ENCODE measurements at regions of chr5 and their contacts with region 1.

Region 1: DNA sequence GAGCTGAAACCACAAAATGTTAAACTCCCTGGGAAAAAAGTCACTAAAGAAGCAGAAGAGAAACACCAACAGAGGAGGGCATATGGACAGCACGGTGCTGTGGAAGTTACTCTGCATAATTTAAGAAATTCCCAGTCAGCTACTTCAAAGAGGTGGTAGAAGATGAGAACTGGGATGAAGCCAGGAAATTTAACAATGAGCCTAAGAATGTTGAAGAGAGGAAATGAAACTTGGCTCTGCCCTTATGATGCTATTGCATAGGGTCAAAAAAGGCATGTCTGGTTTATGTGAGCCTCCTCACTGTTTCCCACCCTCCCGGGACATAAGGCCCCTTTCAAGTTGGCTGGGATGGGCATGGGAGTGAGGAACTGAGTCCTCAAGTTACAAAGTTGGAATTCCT is 25.4 kb upstream of the SNX18 start:
- DNase-seq: no peak
- ATAC-seq: no peak
- H3K4me3 ChIP-seq: no peak overlapping the region
- H3K27ac ChIP-seq: no peak overlapping the region
- H3K4me1 ChIP-seq: peaks cover 3% of the 10 kb centered on the region; the same call in 1 of the 2 replicates
- H3K27me3 ChIP-seq: no peaks in the 10 kb centered on the region
- CTCF ChIP-seq: no peak
- EP300 ChIP-seq: no peak
- POLR2A ChIP-seq: no peak
- RAD21 ChIP-seq: no peak

Region 2: DNA sequence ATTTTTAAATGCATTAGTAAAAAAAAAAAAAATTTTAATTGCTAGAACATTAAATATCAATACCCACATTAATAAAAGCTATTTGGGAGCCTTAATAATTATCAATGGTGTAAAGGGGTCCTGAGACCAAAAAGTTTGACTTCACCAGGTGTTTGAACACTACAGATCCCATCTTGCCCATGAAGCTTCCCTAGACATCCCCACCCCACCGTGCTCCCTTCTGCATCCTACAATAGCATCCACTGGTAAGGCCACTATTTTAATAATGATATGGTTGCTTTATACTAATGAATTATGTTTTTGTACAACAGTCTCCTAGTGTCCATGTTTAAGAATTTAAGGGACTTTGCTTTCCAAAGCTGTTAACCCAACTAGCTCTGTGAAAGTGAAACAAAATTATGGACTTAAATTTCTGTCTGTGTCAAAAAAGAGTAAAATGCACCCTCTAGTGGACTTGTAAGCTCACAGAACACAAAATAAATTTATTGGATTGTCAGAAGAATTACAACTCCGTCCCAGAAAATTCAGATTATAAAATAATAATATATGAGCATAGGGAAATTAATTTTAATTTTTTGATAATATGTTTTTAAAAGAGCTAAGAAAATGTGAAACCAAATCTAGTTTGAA is 257.8 kb before region 1 on chr5:
- CTCF ChIA-PET with region 1: interaction called, 38 read pairs
- POLR2A ChIA-PET with region 1: no interaction called
- RAD21 ChIA-PET with region 1: interaction called, 6 read pairs
- SMC1A ChIA-PET with region 1: interaction called, 24 read pairs
- in situ Hi-C with region 1: no loop called
- intact Hi-C with region 1: no loop called
- DNase-seq: no peak
- ATAC-seq: peak; percentile 72
- H3K4me3 ChIP-seq: no peak overlapping the region
- H3K27ac ChIP-seq: no peak overlapping the region
- H3K4me1 ChIP-seq: no peaks in the 10 kb centered on the region
- H3K27me3 ChIP-seq: no peaks in the 10 kb centered on the region
- CTCF ChIP-seq: peak; percentile 26 to 50 (median 50); a peak in 5 of 6 replicates
- EP300 ChIP-seq: no peak
- POLR2A ChIP-seq: no peak
- RAD21 ChIP-seq: peak; percentile 66

Region 3: GRCh38 chr5:54254482-54255198 is 237.5 kb before region 1 on chr5:
- CTCF ChIA-PET with region 1: interaction called, 10 read pairs
- POLR2A ChIA-PET with region 1: no interaction called
- RAD21 ChIA-PET with region 1: interaction called, 3 read pairs
- SMC1A ChIA-PET with region 1: interaction called, 23 read pairs
- in situ Hi-C with region 1: no loop called
- intact Hi-C with region 1: no loop called
- DNase-seq: no peak
- ATAC-seq: no peak
- H3K4me3 ChIP-seq: no peak overlapping the region
- H3K27ac ChIP-seq: no peak overlapping the region
- H3K4me1 ChIP-seq: peaks cover 3% of the 10 kb centered on the region
- H3K27me3 ChIP-seq: no peaks in the 10 kb centered on the region
- CTCF ChIP-seq: peak in 1 of 3 experiments; percentile 15; a peak in 1 of 6 replicates
- EP300 ChIP-seq: no peak
- POLR2A ChIP-seq: no peak
- RAD21 ChIP-seq: no peak

Region 4: DNA sequence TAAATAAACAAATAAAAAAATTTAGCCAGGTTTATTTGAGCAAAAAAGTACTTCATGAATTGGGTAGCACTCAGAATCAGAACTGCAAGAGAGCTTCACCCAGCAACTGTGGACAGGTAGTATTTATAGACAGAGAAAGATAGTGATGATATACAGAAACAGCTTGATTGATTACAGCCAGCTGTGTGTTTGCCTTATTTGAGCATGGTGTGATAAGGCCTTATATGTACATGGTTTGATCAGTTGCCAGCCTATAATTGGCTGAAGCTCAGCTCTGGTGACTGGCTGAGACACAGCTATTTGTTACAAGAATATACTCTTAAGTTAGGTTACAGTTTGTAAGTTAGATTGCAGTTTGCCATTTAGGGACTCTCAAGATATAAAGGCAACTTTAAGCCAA is 147.5 kb before region 1 on chr5:
- CTCF ChIA-PET with region 1: interaction called, 13 read pairs
- POLR2A ChIA-PET with region 1: no interaction called
- RAD21 ChIA-PET with region 1: no interaction called
- SMC1A ChIA-PET with region 1: no interaction called
- in situ Hi-C with region 1: no loop called
- intact Hi-C with region 1: no loop called
- DNase-seq: no peak
- ATAC-seq: no peak
- H3K4me3 ChIP-seq: no peak overlapping the region
- H3K27ac ChIP-seq: no peak overlapping the region
- H3K4me1 ChIP-seq: no peaks in the 10 kb centered on the region
- H3K27me3 ChIP-seq: no peaks in the 10 kb centered on the region
- CTCF ChIP-seq: no peak
- EP300 ChIP-seq: no peak
- POLR2A ChIP-seq: no peak
- RAD21 ChIP-seq: no peak

Region 5: GRCh38 chr5:54415896-54416601 is 76.1 kb before region 1 on chr5:
- CTCF ChIA-PET with region 1: interaction called, 31 read pairs
- POLR2A ChIA-PET with region 1: no interaction called
- RAD21 ChIA-PET with region 1: interaction called, 3 read pairs
- SMC1A ChIA-PET with region 1: interaction called, 14 read pairs
- in situ Hi-C with region 1: no loop called
- intact Hi-C with region 1: no loop called
- DNase-seq: no peak
- ATAC-seq: peak; percentile 46
- H3K4me3 ChIP-seq: no peak overlapping the region
- H3K27ac ChIP-seq: no peak overlapping the region
- H3K4me1 ChIP-seq: no peaks in the 10 kb centered on the region
- H3K27me3 ChIP-seq: no peaks in the 10 kb centered on the region; a peak in 1 of 4 replicates
- CTCF ChIP-seq: no peak
- EP300 ChIP-seq: no peak
- POLR2A ChIP-seq: no peak
- RAD21 ChIP-seq: no peak

Region 6: GRCh38 chr5:54455413-54456157 is 36.6 kb before region 1 on chr5 and contains the start of gene HSPB3:
- CTCF ChIA-PET with region 1: interaction called, 10 read pairs
- POLR2A ChIA-PET with region 1: no interaction called
- RAD21 ChIA-PET with region 1: interaction called, 5 read pairs
- SMC1A ChIA-PET with region 1: interaction called, 7 read pairs
- in situ Hi-C with region 1: no loop called
- intact Hi-C with region 1: no loop called
- DNase-seq: no peak
- ATAC-seq: no peak
- H3K4me3 ChIP-seq: no peak within 1 kb of the TSS
- H3K27ac ChIP-seq: no peak within 1 kb of the TSS
- H3K4me1 ChIP-seq: no peaks in the 10 kb centered on the region
- H3K27me3 ChIP-seq: peaks cover 0 to 4% of the 10 kb centered on the region in 2 experiments; a peak in 2 of 4 replicates
- CTCF ChIP-seq: no peak
- EP300 ChIP-seq: no peak
- POLR2A ChIP-seq: no peak
- RAD21 ChIP-seq: no peak
- polyA plus RNA-seq, gene HSPB3: 0.11 to 0.29 TPM

Region 7: GRCh38 chr5:54517174-54518092 is 25.3 kb after region 1 on chr5 and contains the start of gene SNX18:
- CTCF ChIA-PET with region 1: interaction called, 10 read pairs
- POLR2A ChIA-PET with region 1: no interaction called
- RAD21 ChIA-PET with region 1: no interaction called
- SMC1A ChIA-PET with region 1: interaction called, 9 read pairs
- in situ Hi-C with region 1: no loop called
- intact Hi-C with region 1: no loop called
- DNase-seq: peak; percentile 24
- ATAC-seq: peak; percentile 98
- H3K4me3 ChIP-seq: peak within 1 kb of the TSS; percentile 73; the same call in 1 of the 2 replicates
- H3K27ac ChIP-seq: peak within 1 kb of the TSS; percentile 33; the same call in 1 of the 2 replicates
- H3K4me1 ChIP-seq: no peaks in the 10 kb centered on the region
- H3K27me3 ChIP-seq: no peaks in the 10 kb centered on the region
- CTCF ChIP-seq: peak; percentile 89 to 98 (median 95); a peak in 5 of 6 replicates
- EP300 ChIP-seq: no peak
- POLR2A ChIP-seq: peak; percentile 73
- RAD21 ChIP-seq: peak; percentile 99
- polyA plus RNA-seq, gene SNX18: 0.27 to 0.32 TPM

Region 8: GRCh38 chr5:54580997-54581811 is 89.0 kb after region 1 on chr5:
- CTCF ChIA-PET with region 1: no interaction called
- POLR2A ChIA-PET with region 1: no interaction called
- RAD21 ChIA-PET with region 1: no interaction called
- SMC1A ChIA-PET with region 1: no interaction called
- in situ Hi-C with region 1: no loop called
- intact Hi-C with region 1: no loop called
- DNase-seq: no peak
- ATAC-seq: no peak
- H3K4me3 ChIP-seq: no peak overlapping the region
- H3K27ac ChIP-seq: no peak overlapping the region
- H3K4me1 ChIP-seq: no peaks in the 10 kb centered on the region
- H3K27me3 ChIP-seq: peaks cover 1 to 2% of the 10 kb centered on the region in 2 experiments; a peak in 1 of 4 replicates
- CTCF ChIP-seq: no peak
- EP300 ChIP-seq: no peak
- POLR2A ChIP-seq: no peak
- RAD21 ChIP-seq: no peak

Region 9: DNA sequence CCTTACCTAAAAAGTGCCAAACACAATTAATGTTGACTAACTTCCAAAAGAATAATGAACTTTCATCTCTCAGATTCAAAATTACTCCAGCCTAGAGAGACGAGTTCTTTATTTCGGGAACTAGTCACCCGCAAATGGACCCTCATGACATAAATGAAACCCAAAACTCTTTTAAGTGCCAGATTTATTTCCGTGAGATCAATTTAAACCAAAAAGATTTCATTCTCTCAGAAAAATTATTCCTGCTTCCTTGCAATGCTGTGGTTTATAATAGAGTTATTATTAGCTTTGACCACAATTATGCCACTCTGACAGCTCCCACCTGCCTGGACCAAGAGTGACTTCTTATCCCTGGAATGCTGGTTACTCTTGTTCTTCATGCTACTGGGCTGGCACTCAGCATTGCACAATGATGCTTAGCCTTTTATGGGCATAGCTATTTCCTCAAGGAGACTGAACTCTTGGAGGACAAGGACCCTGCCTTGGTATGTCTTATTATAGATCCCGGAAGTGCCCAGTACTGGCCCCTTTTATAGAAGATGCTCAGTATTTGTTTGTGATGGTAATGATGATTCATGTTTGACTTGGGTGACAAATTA is 208.9 kb after region 1 on chr5:
- CTCF ChIA-PET with region 1: no interaction called
- POLR2A ChIA-PET with region 1: no interaction called
- RAD21 ChIA-PET with region 1: no interaction called
- SMC1A ChIA-PET with region 1: no interaction called
- in situ Hi-C with region 1: no loop called
- intact Hi-C with region 1: no loop called
- DNase-seq: no peak
- ATAC-seq: no peak
- H3K4me3 ChIP-seq: no peak overlapping the region
- H3K27ac ChIP-seq: no peak overlapping the region
- H3K4me1 ChIP-seq: no peaks in the 10 kb centered on the region
- H3K27me3 ChIP-seq: peaks cover 0 to 3% of the 10 kb centered on the region in 2 experiments; a peak in 2 of 4 replicates
- CTCF ChIP-seq: no peak
- EP300 ChIP-seq: no peak
- POLR2A ChIP-seq: no peak
- RAD21 ChIP-seq: no peak

Measured in GM12878 (cell line).